Transverse colon (tissue), 4 donors: ENCODE measurements at regions of chr7 and their contacts with region 1.

Region 1: GRCh38 chr7:68929781-68930261 is 668.5 kb upstream of the AUTS2 start:
- DNase-seq: no peak
- H3K4me3 ChIP-seq: no peak overlapping the region
- H3K27ac ChIP-seq: no peak overlapping the region
- H3K4me1 ChIP-seq: no peaks in the 10 kb centered on the region
- H3K27me3 ChIP-seq: no peaks in the 10 kb centered on the region
- CTCF ChIP-seq: no peak
- EP300 ChIP-seq: no peak
- POLR2A ChIP-seq: no peak

Region 2: DNA sequence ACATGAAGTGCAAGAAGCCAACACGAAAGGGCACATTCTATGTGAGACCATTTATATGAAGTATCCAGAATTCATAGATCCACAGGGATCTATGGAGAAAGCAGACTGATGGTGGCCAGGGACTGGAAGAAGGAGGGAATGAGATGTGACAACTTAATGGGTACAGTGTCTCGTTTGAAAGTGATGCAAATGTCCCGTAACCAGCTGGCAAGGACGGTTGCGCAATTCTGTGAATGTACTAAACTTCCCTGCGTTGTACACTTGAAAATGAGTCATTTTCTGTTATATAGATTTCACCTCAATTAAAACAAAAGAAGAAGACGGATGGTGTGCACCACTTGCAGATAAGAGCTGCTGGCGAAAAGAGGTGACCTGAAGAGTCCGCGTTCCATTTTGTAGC is 1072.1 kb before region 1 on chr7:
- in situ Hi-C with region 1: no loop called
- intact Hi-C with region 1: no loop called
- DNase-seq: no peak
- H3K4me3 ChIP-seq: no peak overlapping the region
- H3K27ac ChIP-seq: no peak overlapping the region
- H3K4me1 ChIP-seq: no peaks in the 10 kb centered on the region
- H3K27me3 ChIP-seq: no peaks in the 10 kb centered on the region
- CTCF ChIP-seq: no peak
- EP300 ChIP-seq: no peak
- POLR2A ChIP-seq: no peak

Region 3: GRCh38 chr7:68977385-68978055 is 47.7 kb after region 1 on chr7:
- in situ Hi-C with region 1: no loop called
- intact Hi-C with region 1: loop called (anchors 1 kb)
- DNase-seq: no peak
- H3K4me3 ChIP-seq: no peak overlapping the region
- H3K27ac ChIP-seq: no peak overlapping the region
- H3K4me1 ChIP-seq: no peaks in the 10 kb centered on the region
- H3K27me3 ChIP-seq: no peaks in the 10 kb centered on the region
- CTCF ChIP-seq: no peak
- EP300 ChIP-seq: no peak
- POLR2A ChIP-seq: no peak

Region 4: DNA sequence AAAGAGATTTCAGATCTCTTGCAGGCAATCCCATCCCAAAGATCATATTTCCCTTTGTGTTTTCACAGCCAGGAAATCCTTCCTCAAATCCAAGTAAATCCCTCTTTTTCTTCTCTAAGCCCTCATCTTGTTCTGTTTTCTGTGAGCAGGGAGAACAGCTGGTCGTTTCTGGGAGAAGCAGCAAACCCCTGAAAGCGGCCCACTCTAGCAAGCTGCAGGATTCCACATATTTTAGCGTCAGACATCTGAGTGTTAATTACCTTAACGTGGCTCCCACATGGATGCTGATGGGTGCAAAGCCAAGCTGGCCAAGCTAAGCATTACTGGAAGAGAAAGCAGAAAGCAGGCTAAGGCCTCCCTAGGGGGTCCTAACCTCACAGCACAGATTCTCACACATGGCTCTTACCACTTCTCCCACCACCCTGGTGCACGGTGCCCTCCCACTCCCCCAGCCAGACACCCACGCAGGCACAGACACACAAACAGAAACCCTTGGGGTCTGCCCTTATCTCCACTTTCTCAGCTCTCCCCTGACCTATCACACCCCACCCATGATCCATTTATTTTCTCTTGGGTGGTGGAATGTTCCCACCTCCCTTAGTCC is 117.4 kb after region 1 on chr7:
- in situ Hi-C with region 1: loop called in 1 of 4 experiments (anchors 25 kb)
- intact Hi-C with region 1: no loop called
- DNase-seq: no peak
- H3K4me3 ChIP-seq: no peak overlapping the region
- H3K27ac ChIP-seq: no peak overlapping the region
- H3K4me1 ChIP-seq: no peaks in the 10 kb centered on the region
- H3K27me3 ChIP-seq: no peaks in the 10 kb centered on the region
- CTCF ChIP-seq: no peak
- EP300 ChIP-seq: no peak
- POLR2A ChIP-seq: no peak